ENCODE measurements at regions of chr5 and their contacts with region 1.

Region 1: DNA sequence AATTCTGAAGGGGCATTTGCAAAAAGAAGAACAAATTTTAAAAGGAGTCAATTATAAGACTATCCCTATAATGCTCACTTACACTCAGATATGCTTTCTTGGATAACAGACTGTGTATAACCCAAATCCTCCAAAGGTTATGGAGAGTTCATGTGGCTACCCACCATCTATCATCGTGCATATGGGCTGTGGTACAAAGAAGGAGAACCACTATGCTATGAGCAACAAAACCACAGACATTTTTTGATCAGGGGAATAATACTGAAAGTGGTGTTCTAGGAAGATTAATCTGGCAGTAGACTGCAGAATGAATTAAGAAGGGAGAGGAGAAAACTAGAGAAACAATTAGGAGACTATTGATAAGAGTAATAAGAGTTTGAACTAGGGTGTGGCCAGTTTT is 16.8 kb downstream of the NR3C1 start:
- DNase-seq: no peak
- ATAC-seq: no peak
- H3K4me3 ChIP-seq: no peak overlapping the region
- H3K27ac ChIP-seq: peak overlapping the region in 1 of 10 donors; percentile 2
- H3K4me1 ChIP-seq: peaks cover 0 to 62% (median 53%) of the 10 kb centered on the region in 9 donors
- H3K27me3 ChIP-seq: no peaks in the 10 kb centered on the region
- CTCF ChIP-seq: no peak

Region 2: DNA sequence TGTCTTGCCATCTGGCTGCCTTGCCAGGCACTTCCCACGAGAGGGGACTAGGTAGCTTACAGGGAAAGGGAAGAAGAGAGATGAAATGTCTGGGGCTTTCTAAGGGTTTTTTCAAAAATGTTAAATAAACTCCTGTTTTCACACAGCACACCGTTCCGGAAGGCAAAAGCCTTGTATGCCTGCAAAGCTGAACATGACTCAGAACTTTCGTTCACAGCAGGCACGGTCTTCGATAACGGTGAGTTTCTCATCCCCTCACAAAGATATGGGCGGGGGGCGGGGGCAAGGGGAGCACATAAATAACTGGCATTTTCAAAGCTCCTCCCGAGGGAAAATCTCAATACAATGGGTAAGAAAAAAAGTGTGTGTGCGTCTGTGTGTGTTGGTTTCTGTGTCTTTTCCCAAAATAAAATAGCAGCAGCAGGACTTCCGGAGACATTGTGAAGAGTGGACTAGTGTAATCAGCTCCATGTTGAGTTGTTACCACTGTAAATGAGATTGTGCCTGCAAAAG is 172.8 kb before region 1 on chr5:
- intact Hi-C with region 1: loop called in 1 of 10 experiments (anchors 5 kb)
- DNase-seq: no peak
- ATAC-seq: peak in 7 of 8 donors; percentile 21 to 77 (median 49)
- H3K4me3 ChIP-seq: no peak overlapping the region
- H3K27ac ChIP-seq: peak overlapping the region in 9 of 10 donors; percentile 9 to 79 (median 66)
- H3K4me1 ChIP-seq: peaks cover 0 to 61% (median 45%) of the 10 kb centered on the region in 9 donors
- H3K27me3 ChIP-seq: no peaks in the 10 kb centered on the region
- CTCF ChIP-seq: no peak

Region 3: DNA sequence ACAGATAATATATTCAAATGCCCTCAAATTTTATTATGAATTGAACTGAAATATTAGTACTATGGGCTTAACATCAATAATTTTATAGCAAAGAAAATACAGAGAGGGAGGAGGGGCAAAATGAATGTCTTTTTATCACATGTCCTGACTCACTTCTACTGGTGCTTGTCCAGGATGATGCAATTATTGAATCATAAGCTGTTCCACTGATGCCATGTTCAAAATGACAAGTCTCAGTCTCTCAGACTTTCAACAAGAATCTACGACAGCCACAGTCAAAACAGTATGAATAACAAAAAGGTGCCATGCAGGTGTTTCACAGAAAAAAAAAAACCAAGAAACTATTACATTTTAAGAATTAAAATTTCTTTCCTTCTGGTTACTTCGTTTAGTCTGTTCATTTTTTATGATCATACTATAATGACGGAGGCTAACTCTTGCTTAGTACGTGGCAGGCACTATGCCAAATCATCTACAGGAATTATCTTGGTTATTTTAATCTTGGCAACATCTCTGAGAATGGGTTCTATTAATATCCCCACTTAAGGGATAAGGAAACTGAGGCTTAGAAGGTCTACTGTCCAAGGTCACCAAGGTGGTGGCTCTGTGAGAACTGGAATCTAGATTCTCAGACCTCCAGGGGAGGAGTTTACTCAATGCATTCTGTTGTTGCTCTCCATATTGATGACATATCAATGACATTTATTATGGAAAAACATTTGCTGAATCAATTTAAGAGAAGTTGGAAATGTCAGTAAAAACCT is 44.7 kb before region 1 on chr5:
- intact Hi-C with region 1: loop called in 2 of 10 experiments (anchors 5 kb)
- DNase-seq: no peak
- ATAC-seq: peak in 4 of 8 donors; percentile 39 to 80 (median 45)
- H3K4me3 ChIP-seq: no peak overlapping the region
- H3K27ac ChIP-seq: peak overlapping the region in 9 of 10 donors; percentile 15 to 86 (median 60)
- H3K4me1 ChIP-seq: peaks cover 1 to 99% (median 74%) of the 10 kb centered on the region in 9 donors
- H3K27me3 ChIP-seq: no peaks in the 10 kb centered on the region
- CTCF ChIP-seq: no peak

Region 4: GRCh38 chr5:143355720-143356119 is 31.0 kb before region 1 on chr5:
- intact Hi-C with region 1: loop called in 1 of 10 experiments (anchors 5 kb)
- DNase-seq: peak; percentile 26 to 87
- ATAC-seq: peak; percentile 77 to 93 (median 86)
- H3K4me3 ChIP-seq: no peak overlapping the region
- H3K27ac ChIP-seq: peak overlapping the region in 6 of 10 donors; percentile 1 to 61 (median 45)
- H3K4me1 ChIP-seq: peaks cover 4 to 94% (median 82%) of the 10 kb centered on the region in 9 donors
- H3K27me3 ChIP-seq: no peaks in the 10 kb centered on the region
- CTCF ChIP-seq: no peak

Measured in heart right ventricle (tissue), 16 donors.